Activated CD8-positive, alpha-beta T cell treated with anti-CD3 and anti-CD28 coated beads for 36 hours (primary cell): ENCODE measurements at regions of chr9 and their contacts with region 1.

Region 1: GRCh38 chr9:114108016-114108833 is 9.1 kb upstream of the KIF12 start:
- DNase-seq: peak; percentile 75
- ATAC-seq: peak; percentile 98
- H3K4me3 Mint-ChIP-seq: no peak overlapping the region
- H3K27ac Mint-ChIP-seq: no peak overlapping the region
- H3K4me1 Mint-ChIP-seq: no peaks in the 10 kb centered on the region
- H3K27me3 Mint-ChIP-seq: peaks cover 4% of the 10 kb centered on the region
- CTCF ChIP-seq: peak; percentile 84

Region 2: GRCh38 chr9:113868501-113868900 is 239.7 kb before region 1 on chr9:
- CTCF ChIA-PET with region 1: no interaction called
- POLR2A ChIA-PET with region 1: no interaction called
- intact Hi-C with region 1: no loop called
- DNase-seq: no peak
- ATAC-seq: no peak
- H3K4me3 Mint-ChIP-seq: no peak overlapping the region
- H3K27ac Mint-ChIP-seq: no peak overlapping the region
- H3K4me1 Mint-ChIP-seq: no peaks in the 10 kb centered on the region
- H3K27me3 Mint-ChIP-seq: peaks cover 5% of the 10 kb centered on the region
- CTCF ChIP-seq: no peak

Region 3: GRCh38 chr9:114130141-114130540 is 21.9 kb after region 1 on chr9:
- CTCF ChIA-PET with region 1: interaction called, 10 read pairs
- POLR2A ChIA-PET with region 1: no interaction called
- intact Hi-C with region 1: no loop called
- DNase-seq: no peak
- ATAC-seq: no peak
- H3K4me3 Mint-ChIP-seq: no peak overlapping the region
- H3K27ac Mint-ChIP-seq: no peak overlapping the region
- H3K4me1 Mint-ChIP-seq: no peaks in the 10 kb centered on the region
- H3K27me3 Mint-ChIP-seq: peaks cover 3% of the 10 kb centered on the region
- CTCF ChIP-seq: no peak

Region 4: GRCh38 chr9:114271641-114272081 is 163.4 kb after region 1 on chr9:
- CTCF ChIA-PET with region 1: interaction called, 14 read pairs
- POLR2A ChIA-PET with region 1: no interaction called
- intact Hi-C with region 1: no loop called
- DNase-seq: peak; percentile 35
- ATAC-seq: peak; percentile 37
- H3K4me3 Mint-ChIP-seq: no peak overlapping the region
- H3K27ac Mint-ChIP-seq: no peak overlapping the region
- H3K4me1 Mint-ChIP-seq: no peaks in the 10 kb centered on the region
- H3K27me3 Mint-ChIP-seq: no peaks in the 10 kb centered on the region
- CTCF ChIP-seq: peak; percentile 21

Region 5: DNA sequence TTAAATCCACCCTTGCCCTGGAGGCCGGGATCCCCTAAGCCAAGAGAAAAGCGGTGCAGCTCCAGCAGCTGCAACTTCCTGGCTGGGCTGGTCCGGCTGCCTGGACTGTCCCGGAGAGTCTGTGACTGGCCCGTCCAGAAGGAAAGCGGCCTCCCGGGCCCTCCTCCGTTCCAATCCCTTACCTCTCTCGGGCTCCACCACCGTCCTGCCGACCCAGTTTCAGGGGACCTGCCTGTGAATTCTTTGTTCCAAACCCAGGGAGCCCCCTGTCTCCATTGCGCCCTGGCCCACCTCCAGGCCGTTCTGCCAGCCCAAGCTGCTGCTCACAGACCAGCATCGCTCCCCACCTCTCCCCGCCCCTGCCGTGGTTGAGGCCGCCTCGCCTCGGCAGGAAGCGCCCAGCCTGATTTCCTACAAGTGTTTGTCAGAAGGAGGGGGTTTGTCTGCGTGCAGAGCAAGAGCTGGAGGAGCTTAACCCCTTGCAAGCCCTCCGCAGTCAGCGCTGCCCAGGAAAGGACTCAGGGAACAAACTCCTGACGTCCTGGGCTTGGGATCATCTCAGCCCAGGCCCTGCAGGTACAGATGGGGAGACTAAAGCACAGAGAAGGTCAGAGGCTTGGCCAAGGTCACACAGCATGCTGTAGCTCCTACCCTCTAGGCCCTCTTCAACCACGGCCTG is 279.6 kb after region 1 on chr9 and contains the start of gene AKNA:
- CTCF ChIA-PET with region 1: no interaction called
- POLR2A ChIA-PET with region 1: no interaction called
- intact Hi-C with region 1: no loop called
- DNase-seq: peak; percentile 88
- ATAC-seq: peak; percentile 20
- H3K4me3 Mint-ChIP-seq: peak within 1 kb of the TSS; percentile 84
- H3K27ac Mint-ChIP-seq: peak within 1 kb of the TSS; percentile 94
- H3K4me1 Mint-ChIP-seq: peaks cover 38% of the 10 kb centered on the region
- H3K27me3 Mint-ChIP-seq: no peaks in the 10 kb centered on the region
- CTCF ChIP-seq: no peak
- total RNA-seq, gene AKNA: 166 to 167 TPM